CD14-positive monocyte (primary cell): ENCODE measurements at regions of chr12 and their contacts with region 1.

Region 1: DNA sequence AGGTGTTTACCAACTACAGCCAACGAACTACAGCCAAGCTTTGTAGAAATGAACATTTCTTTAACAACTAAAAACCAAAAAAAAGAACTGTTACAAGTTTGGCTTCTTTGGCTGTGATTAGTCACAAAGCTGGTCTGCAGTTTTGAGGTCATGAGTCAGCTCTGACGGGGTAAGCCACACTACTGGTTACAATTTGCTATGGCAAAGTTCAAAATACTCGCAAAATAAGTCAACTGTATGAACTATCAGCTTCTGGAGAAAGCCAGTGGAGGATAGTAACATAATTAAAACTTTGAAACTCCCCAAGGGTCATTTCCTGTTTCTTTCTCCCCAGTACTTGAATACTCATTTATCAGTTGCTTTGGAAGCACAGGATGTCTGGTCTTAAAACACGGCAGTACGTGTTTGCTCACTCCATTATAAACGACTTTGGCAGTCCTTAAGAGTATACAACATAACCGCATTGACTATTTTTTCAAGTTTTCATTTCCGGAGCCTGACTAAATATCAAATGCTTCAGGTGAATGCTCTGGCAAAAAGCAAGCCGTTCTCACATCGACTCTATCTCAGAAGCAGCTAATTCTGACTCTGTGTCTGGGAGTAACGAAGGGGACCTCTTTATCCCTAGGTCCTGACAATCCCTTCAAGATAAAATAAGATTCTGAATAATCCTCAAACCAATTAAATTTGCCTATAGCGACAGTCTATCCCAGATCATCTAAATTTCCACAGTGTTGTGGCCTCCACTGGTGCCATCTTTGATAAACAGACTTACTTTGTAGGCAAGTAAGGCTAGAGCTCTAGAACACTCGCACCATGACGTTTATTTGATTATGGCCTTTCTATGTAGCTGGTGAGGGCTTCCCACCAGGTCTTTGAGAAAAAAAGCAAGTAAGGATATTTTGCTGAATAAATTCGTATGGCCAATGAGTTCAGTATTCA is 10.6 kb downstream of the PHLDA1 start:
- DNase-seq: peak; percentile 87 to 94 (median 93)
- H3K4me3 ChIP-seq: no peak overlapping the region
- H3K4me3 Mint-ChIP-seq: peak overlapping the region in 1 of 2 donors; percentile 17
- H3K27ac ChIP-seq: peak overlapping the region in 1 of 2 donors; percentile 82
- H3K27ac Mint-ChIP-seq: peak overlapping the region; percentile 92 to 96 (median 95)
- H3K4me1 ChIP-seq: peaks cover 16 to 17% of the 10 kb centered on the region in 2 donors
- H3K4me1 Mint-ChIP-seq: peaks cover 36% of the 10 kb centered on the region
- H3K27me3 ChIP-seq: peaks cover 0 to 3% of the 10 kb centered on the region in 2 donors
- H3K27me3 Mint-ChIP-seq: peaks cover 2 to 5% (median 5%) of the 10 kb centered on the region in 3 donors
- CTCF ChIP-seq: no peak

Region 2: GRCh38 chr12:75933101-75933500 is 87.9 kb before region 1 on chr12:
- intact Hi-C with region 1: loop called in 1 of 2 experiments (anchors 5 kb)
- DNase-seq: peak in 2 of 3 donors; percentile 41 to 48
- H3K4me3 ChIP-seq: no peak overlapping the region
- H3K4me3 Mint-ChIP-seq: peak overlapping the region in 1 of 2 donors; percentile 37
- H3K27ac ChIP-seq: no peak overlapping the region
- H3K27ac Mint-ChIP-seq: no peak overlapping the region
- H3K4me1 ChIP-seq: peaks cover 9 to 13% of the 10 kb centered on the region in 2 donors
- H3K4me1 Mint-ChIP-seq: peaks cover 12% of the 10 kb centered on the region
- H3K27me3 ChIP-seq: peaks cover 33 to 41% of the 10 kb centered on the region in 2 donors
- H3K27me3 Mint-ChIP-seq: peaks cover 17 to 36% (median 25%) of the 10 kb centered on the region in 3 donors
- CTCF ChIP-seq: no peak

Region 3: GRCh38 chr12:75944097-75944904 is 76.7 kb before region 1 on chr12:
- intact Hi-C with region 1: loop called in 1 of 2 experiments (anchors 1 kb)
- DNase-seq: peak; percentile 74 to 89 (median 88)
- H3K4me3 ChIP-seq: no peak overlapping the region
- H3K4me3 Mint-ChIP-seq: peak overlapping the region in 1 of 2 donors; percentile 71
- H3K27ac ChIP-seq: peak overlapping the region in 1 of 2 donors; percentile 89
- H3K27ac Mint-ChIP-seq: peak overlapping the region; percentile 86 to 97 (median 93)
- H3K4me1 ChIP-seq: peaks cover 16 to 18% of the 10 kb centered on the region in 2 donors
- H3K4me1 Mint-ChIP-seq: peaks cover 19% of the 10 kb centered on the region
- H3K27me3 ChIP-seq: no peaks in the 10 kb centered on the region
- H3K27me3 Mint-ChIP-seq: peaks cover 0 to 6% (median 3%) of the 10 kb centered on the region in 3 donors
- CTCF ChIP-seq: no peak

Region 4: DNA sequence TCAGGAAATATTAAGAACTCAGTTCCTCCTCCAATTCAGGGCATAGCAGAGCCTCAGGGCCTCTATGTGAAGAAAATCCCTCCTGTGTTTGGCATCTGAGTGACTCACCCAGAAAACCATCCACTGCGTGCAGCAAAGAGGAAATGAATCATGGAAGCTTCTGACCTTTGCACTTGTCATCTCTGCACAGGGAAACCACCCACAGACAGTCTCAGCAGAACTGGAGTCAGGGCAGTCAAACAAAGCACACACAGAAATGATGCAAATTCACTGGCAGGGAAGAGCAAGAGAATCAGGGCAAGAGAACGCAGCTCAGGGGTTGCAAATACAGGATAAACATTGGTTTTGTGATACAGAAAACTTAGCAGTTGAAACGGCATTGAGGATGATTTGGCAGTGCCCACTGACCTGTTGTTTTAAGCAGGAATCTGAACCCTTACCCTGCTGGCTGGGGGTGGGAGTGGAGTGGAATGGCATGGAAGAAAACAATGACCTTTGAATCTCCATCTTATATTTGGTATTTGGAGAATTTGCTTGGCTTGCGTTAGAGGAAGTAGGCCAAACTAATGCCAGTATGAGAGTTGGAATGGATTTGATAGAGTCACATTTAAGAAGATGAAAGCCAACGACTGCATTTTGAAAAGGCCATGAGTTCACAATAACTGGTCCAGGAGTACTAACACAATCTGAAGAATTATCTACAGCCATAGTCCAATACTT is 42.9 kb before region 1 on chr12:
- intact Hi-C with region 1: loop called (anchors 5 to 10 kb)
- DNase-seq: peak; percentile 98 to 100 (median 99)
- H3K4me3 ChIP-seq: no peak overlapping the region
- H3K4me3 Mint-ChIP-seq: peak overlapping the region; percentile 4 to 79
- H3K27ac ChIP-seq: peak overlapping the region; percentile 95
- H3K27ac Mint-ChIP-seq: peak overlapping the region; percentile 98 to 100 (median 99)
- H3K4me1 ChIP-seq: peaks cover 61 to 64% of the 10 kb centered on the region in 2 donors
- H3K4me1 Mint-ChIP-seq: peaks cover 70% of the 10 kb centered on the region
- H3K27me3 ChIP-seq: no peaks in the 10 kb centered on the region
- H3K27me3 Mint-ChIP-seq: peaks cover 0 to 2% (median 0%) of the 10 kb centered on the region in 3 donors
- CTCF ChIP-seq: no peak

Region 5: GRCh38 chr12:76010732-76011458 is 10.1 kb before region 1 on chr12:
- intact Hi-C with region 1: no loop called
- DNase-seq: no peak
- H3K4me3 ChIP-seq: no peak overlapping the region
- H3K4me3 Mint-ChIP-seq: no peak overlapping the region
- H3K27ac ChIP-seq: no peak overlapping the region
- H3K27ac Mint-ChIP-seq: no peak overlapping the region
- H3K4me1 ChIP-seq: no peaks in the 10 kb centered on the region
- H3K4me1 Mint-ChIP-seq: no peaks in the 10 kb centered on the region
- H3K27me3 ChIP-seq: no peaks in the 10 kb centered on the region
- H3K27me3 Mint-ChIP-seq: peaks cover 0 to 6% (median 3%) of the 10 kb centered on the region in 3 donors
- CTCF ChIP-seq: no peak

Region 6: DNA sequence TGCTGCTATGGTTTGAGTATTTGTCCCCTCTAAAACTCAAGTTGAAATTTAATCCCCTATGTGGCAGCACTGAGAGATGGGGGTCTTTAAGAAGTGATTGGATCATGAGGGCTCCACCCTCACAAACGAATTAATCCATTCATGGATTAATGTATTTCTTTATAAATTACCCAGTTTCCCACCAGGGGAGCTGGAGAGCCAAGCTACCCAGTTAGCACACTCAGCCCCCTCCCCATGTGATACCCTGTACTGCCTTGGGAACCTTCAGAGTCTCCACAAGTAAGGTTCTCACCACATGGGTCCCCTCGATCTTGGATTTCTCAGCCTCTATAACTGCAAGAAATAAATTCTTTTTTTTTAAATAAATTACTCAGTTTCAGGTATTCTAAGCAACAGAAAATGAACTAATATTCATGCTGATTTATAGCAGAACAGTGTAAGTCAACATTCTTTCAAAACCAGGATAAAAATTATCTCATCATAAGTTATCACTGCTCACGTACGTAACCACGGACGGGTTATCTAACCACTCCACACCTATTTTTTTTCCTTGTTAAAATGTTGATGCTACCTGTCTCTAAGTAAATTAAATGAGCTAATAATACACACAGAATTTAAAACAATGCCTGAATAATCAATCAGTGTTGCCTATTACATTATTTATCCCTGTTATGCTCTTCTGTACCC is 59.9 kb after region 1 on chr12:
- intact Hi-C with region 1: no loop called
- DNase-seq: peak in 1 of 3 donors; percentile 12
- H3K4me3 ChIP-seq: no peak overlapping the region
- H3K4me3 Mint-ChIP-seq: no peak overlapping the region
- H3K27ac ChIP-seq: no peak overlapping the region
- H3K27ac Mint-ChIP-seq: no peak overlapping the region
- H3K4me1 ChIP-seq: peaks cover 19 to 28% of the 10 kb centered on the region in 2 donors
- H3K4me1 Mint-ChIP-seq: peaks cover 37% of the 10 kb centered on the region
- H3K27me3 ChIP-seq: no peaks in the 10 kb centered on the region
- H3K27me3 Mint-ChIP-seq: peaks cover 0 to 2% (median 0%) of the 10 kb centered on the region in 3 donors
- CTCF ChIP-seq: peak; percentile 17